HEK293 (cell line): ENCODE measurements at regions of chr19 and their contacts with region 1.

Region 1: GRCh38 chr19:1605236-1606137 is at the start of gene UQCR11:
- H3K4me3 ChIP-seq: peak within 1 kb of the TSS; percentile 96
- H3K27ac ChIP-seq: peak within 1 kb of the TSS; percentile 76
- H3K4me1 ChIP-seq: no peaks in the 10 kb centered on the region
- CTCF ChIP-seq: peak; percentile 83

Region 2: GRCh38 chr19:1592755-1593500 is 12.6 kb before region 1 on chr19 and contains the start of gene MBD3:
- CTCF ChIA-PET with region 1: interaction called, 3 read pairs
- POLR2A ChIA-PET with region 1: interaction called, 27 read pairs
- H3K4me3 ChIP-seq: peak within 1 kb of the TSS; percentile 84
- H3K27ac ChIP-seq: peak within 1 kb of the TSS; percentile 100
- H3K4me1 ChIP-seq: no peaks in the 10 kb centered on the region
- CTCF ChIP-seq: no peak

Region 3: DNA sequence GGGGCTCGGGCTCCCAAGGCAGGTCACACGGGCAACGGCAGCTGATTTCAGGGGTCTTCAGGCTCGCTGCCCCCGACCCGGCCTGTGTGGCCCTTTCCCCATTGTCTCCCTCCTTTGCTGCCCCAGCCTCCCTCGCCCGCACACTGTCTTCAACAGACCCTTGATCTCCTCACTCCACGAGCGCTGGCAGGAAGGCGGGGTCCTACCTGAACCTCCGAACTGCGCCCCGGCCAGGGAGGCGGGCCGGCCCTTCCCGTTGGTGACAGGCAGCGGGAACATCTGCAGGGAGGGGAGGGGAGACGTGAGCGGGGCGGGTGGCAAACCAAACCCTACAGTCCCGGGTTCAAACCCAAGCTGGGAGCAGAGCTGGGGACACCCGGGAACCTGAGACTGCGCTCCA is 40.7 kb after region 1 on chr19:
- CTCF ChIA-PET with region 1: no interaction called
- POLR2A ChIA-PET with region 1: no interaction called
- H3K4me3 ChIP-seq: no peak overlapping the region
- H3K27ac ChIP-seq: no peak overlapping the region
- H3K4me1 ChIP-seq: peaks cover 3% of the 10 kb centered on the region; the same call in 1 of the 2 replicates
- CTCF ChIP-seq: no peak